Activated CD8-positive, alpha-beta T cell treated with anti-CD3 and anti-CD28 coated beads, Interleukin-2, amount 10 ng/mL, durations not matched to agents 7 days and 5 days (primary cell): ENCODE measurements at regions of chr1 and their contacts with region 1.

Region 1: DNA sequence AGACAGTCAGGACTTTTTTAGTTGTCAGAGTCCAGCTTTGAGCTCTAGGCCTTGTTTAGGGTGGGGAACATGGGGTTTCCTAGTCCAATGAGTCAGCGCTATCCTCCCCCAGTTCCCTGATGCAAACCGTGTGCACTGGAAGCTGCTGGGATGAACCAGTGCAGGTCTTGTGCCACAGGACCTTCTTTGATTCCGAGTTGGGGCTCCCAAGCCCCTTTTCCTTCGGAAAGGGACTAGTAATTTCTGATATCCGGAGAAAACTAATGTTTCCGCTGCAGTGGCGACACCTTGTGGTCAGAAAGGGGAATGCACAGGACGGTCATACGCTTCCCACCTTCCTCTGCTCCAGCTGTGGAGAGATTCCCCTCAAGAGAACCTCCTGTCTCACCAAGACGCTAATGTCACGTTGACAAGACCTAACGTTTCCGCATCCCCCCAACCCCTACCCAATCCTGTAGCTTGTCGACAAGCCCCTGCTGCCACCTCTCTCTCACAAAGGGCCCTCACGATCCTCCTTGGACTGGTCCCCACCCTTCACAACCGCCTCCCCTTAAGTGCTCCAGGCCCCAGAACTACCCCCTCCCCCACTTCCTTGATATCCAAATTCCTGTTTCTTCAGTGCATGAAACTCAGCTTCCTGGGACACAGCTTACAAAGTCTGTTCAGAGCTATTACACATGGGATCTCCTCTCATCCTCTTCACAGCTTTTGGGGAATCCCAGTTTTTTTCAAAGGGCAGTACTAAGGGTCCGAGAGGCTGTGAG is 30.9 kb downstream of the GPA33 start:
- DNase-seq: peak; percentile 81
- ATAC-seq: peak; percentile 50
- H3K4me3 Mint-ChIP-seq: no peak overlapping the region
- H3K27ac Mint-ChIP-seq: peak overlapping the region; percentile 21
- H3K4me1 Mint-ChIP-seq: peaks cover 12% of the 10 kb centered on the region
- H3K27me3 Mint-ChIP-seq: peaks cover 3% of the 10 kb centered on the region

Region 2: GRCh38 chr1:166875734-166876539 is 183.3 kb before region 1 on chr1 and contains the start of gene TADA1:
- CTCF ChIA-PET with region 1: interaction called, 137 read pairs
- POLR2A ChIA-PET with region 1: no interaction called
- DNase-seq: peak; percentile 99
- ATAC-seq: peak; percentile 92
- H3K4me3 Mint-ChIP-seq: peak within 1 kb of the TSS; percentile 98
- H3K27ac Mint-ChIP-seq: peak within 1 kb of the TSS; percentile 99
- H3K4me1 Mint-ChIP-seq: peaks cover 46% of the 10 kb centered on the region
- H3K27me3 Mint-ChIP-seq: peaks cover 4% of the 10 kb centered on the region
- total RNA-seq, gene TADA1: 12.9 to 13.6 TPM

Region 3: DNA sequence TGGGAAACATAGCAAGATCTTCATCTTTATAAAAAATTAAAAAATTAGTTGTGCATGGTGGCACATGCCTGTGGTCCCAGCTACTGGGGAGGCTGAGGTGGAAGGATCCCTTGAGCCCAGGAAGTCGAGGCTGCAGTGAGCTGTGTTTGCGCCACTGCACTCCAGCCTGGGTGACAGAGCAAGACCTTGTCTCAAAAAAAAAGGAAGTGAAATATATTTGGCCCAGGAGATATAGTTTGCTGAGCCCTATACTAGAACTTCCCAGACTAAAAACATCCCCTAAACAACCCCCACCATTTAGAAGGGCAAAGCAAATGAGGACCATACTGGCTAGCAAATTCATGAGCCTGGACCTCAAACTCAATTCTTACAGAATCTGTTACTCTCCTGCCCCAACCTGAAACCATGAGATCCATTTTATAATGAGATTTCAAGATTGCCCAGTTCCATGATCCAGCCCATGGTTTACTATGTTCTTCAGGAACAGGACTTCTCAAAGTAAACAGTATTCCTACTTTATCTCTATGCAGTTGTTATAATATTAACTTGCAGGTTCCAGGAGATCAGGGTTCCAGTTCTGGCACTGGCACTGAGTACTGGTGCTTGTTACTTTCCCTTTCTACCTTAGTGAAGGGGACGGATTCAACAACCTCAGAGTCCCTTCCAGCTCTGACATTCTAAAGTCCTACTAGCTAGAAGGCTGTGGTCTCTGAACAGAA is 134.2 kb before region 1 on chr1:
- CTCF ChIA-PET with region 1: interaction called, 838 read pairs
- POLR2A ChIA-PET with region 1: no interaction called
- DNase-seq: no peak
- ATAC-seq: no peak
- H3K4me3 Mint-ChIP-seq: no peak overlapping the region
- H3K27ac Mint-ChIP-seq: no peak overlapping the region
- H3K4me1 Mint-ChIP-seq: peaks cover 1% of the 10 kb centered on the region
- H3K27me3 Mint-ChIP-seq: peaks cover 25% of the 10 kb centered on the region

Region 4: DNA sequence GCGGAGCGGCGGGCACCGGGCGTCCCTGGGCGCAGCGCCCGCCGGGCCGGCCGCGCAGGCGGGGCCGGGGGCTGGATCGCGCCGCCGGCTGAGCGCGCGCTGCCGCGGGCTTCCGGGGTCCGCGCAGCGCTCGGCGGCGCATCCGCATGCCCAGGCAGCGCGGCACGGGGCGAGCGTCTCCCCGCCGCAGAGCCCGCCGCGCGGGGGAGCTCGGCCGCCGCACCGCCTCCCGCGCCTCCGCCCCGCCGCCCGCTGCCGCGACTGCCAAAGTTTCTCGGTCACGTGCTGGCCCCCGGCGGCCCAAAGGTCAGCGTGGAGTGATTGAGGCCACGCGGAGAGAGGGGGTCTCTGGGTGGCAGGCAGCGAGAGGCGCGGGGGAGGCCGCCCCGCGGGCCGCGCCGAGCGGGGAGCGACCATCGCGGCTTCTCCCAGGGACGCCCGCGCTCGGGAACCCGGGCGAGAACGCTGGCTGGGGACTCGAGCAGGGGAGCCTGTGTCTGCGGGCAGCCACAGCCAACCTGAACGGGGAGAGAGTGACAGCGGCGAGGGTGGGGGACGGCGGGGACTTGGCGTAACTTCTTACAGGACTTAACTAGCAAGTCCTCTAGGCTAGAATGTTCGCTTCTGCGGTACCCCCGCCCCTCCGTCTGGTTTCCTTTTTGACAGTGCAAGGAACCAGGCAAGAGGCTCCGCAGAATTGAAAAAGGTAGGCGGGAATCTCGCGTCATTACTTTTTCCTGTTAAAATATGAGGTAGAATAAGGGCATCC is 83.7 kb before region 1 on chr1 and contains the start of gene ILDR2:
- CTCF ChIA-PET with region 1: interaction called, 12 read pairs
- POLR2A ChIA-PET with region 1: interaction called, 3 read pairs
- DNase-seq: peak; percentile 70
- ATAC-seq: peak; percentile 94
- H3K4me3 Mint-ChIP-seq: peak within 1 kb of the TSS; percentile 78
- H3K27ac Mint-ChIP-seq: peak within 1 kb of the TSS; percentile 36
- H3K4me1 Mint-ChIP-seq: peaks cover 33% of the 10 kb centered on the region
- H3K27me3 Mint-ChIP-seq: peaks cover 37% of the 10 kb centered on the region
- total RNA-seq, gene ILDR2: 4.3 to 5.0 TPM

Region 5: DNA sequence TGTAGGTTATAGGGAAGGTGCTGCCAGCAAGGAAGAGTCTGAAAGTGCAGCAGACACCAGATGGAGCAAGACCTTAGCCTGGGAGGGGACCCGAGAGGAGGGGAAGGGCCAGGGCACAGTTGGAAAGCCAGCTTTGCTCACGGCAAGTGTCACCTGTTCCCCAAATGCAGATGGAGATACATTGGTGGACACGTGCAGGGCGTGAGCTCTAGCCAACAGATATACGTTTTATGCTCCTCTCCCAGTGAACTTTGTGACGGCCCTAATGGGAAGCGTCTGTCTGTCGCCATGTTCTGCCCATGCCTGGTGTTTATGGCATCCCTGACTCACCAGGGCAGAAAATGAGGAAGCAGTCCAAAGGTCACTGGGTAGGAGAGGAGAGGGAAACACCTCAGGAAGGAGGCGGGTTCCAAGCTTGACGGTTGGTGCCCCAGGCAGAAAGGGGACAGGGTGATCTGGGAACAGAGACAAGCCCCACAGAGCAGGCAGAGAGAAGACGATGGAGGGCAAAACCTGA is 23.3 kb after region 1 on chr1:
- CTCF ChIA-PET with region 1: interaction called, 11 read pairs
- POLR2A ChIA-PET with region 1: no interaction called
- DNase-seq: no peak
- ATAC-seq: no peak
- H3K4me3 Mint-ChIP-seq: no peak overlapping the region
- H3K27ac Mint-ChIP-seq: no peak overlapping the region
- H3K4me1 Mint-ChIP-seq: no peaks in the 10 kb centered on the region
- H3K27me3 Mint-ChIP-seq: peaks cover 14% of the 10 kb centered on the region

Region 6: DNA sequence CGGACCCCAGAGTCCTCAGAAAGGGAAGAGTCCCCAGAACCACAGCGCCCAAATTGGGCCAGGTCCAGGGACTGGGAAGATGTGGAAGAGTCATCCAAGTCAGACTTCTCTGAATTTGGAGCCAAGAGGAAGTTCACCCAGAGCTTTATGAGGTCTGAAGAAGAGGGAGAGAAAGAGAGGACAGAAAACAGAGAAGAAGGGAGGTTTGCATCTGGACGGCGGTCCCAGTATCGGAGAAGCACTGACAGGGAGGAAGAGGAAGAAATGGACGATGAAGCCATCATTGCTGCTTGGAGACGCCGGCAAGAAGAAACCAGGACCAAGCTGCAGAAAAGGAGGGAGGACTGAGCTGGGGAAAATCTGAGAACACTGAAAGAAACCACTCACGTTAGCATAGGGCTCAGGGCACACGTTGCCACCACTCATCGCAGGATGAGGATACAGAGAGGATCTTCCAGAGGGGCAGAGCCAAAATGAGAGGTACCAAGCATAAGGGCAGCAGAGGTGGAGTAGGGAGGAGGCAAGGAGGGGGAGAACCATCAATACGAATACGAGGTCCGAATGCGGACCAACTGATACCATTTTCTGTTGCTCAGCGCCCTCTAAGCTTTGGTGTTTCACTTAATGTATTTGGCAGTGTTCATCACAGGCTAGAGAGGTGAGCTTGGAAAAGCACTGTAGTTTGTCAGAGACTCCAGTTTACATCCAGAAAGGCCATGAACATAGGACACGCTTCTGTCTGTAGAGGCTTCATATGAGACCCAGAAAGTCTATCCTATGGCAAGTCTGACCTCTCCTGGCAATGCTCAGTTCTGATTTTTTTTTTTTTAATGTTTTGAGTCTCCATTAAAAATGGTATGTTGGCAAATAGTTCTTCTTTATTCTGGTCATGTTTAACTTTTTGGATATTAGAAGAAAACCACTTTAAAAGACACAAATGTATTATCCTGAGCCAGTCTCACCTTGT is 69.3 kb after region 1 on chr1:
- CTCF ChIA-PET with region 1: interaction called, 57 read pairs
- POLR2A ChIA-PET with region 1: no interaction called
- DNase-seq: no peak
- ATAC-seq: no peak
- H3K4me3 Mint-ChIP-seq: no peak overlapping the region
- H3K27ac Mint-ChIP-seq: no peak overlapping the region
- H3K4me1 Mint-ChIP-seq: no peaks in the 10 kb centered on the region
- H3K27me3 Mint-ChIP-seq: peaks cover 18% of the 10 kb centered on the region